Psoas muscle (tissue), 8 donors: ENCODE measurements at regions of chr16 and their contacts with region 1.

Region 1: DNA sequence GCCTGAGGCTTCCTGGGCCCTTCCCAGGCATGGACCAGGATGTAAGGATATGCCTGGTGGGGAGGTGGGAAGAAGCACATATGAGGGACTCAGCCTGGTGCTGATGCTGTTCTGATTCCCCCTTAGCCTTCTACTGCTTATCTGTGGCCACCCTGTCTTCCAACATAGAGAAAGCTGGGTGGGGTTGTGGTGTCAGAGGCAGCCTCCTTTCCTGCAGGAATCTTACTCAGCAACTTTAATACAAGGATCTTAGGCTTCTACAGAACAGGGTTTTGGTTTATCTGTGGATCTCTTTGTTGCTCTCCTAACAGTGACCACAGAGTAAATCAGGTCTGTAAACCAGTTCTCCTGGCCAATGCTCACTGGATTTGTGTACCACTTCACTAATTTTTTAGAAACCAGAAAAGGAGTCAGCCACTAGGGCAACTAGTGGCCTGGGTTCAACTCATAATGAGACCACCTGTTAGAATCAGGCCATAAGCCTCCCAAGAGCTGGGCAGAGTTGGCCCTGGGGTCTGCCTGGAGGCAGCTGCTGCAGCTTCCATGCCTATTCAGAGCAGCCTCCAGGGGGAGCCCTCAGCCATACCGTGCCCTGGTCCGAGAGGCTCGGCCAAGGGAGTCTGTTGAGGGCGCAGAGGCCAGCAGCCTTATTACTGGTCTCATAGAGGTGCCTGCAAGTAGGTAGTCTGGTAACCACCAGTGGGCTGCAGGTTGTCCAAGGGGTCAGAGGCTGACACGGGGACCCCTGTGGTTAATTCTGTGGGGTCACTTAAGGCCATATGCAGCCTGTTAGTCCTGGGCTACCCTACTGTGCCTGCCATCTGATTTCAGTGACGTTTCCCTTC is 7.1 kb downstream of the HAS3 start:
- DNase-seq: peak; percentile 43 to 71
- ATAC-seq: peak; percentile 52 to 77 (median 74)
- H3K4me3 ChIP-seq: no peak overlapping the region
- H3K27ac ChIP-seq: no peak overlapping the region
- H3K4me1 ChIP-seq: peaks cover 8% of the 10 kb centered on the region
- H3K27me3 ChIP-seq: peaks cover 0 to 4% (median 0%) of the 10 kb centered on the region in 3 donors
- CTCF ChIP-seq: peak; percentile 54

Region 2: DNA sequence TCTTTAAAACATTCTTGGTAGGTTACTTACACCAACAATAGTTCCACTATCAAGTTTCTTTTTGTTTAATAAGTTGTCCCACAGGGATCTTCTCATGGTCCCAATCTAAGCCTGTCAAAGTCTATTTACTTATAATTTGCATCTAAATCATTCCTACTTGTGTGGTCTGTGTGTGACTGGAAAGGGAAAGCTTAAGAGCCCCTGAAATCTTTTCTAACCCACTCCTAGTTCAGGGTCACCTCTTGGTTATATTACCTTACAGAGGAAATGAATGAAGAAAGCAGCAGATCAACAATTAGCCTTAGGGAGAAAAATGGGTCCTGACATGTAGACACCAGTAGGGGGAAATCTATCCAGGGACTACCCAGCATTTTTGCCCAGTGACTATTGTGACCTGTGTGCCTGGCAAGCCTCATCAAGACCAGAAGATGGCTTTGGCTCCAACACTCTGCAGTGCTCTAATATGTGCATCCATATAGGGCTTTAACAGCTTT is 117.4 kb before region 1 on chr16:
- intact Hi-C with region 1: loop called (anchors 10 kb)
- DNase-seq: no peak
- ATAC-seq: peak in 2 of 4 donors; percentile 52 to 60
- H3K4me3 ChIP-seq: no peak overlapping the region
- H3K27ac ChIP-seq: no peak overlapping the region
- H3K4me1 ChIP-seq: no peaks in the 10 kb centered on the region
- H3K27me3 ChIP-seq: no peaks in the 10 kb centered on the region
- CTCF ChIP-seq: no peak

Region 3: GRCh38 chr16:69003500-69003899 is 109.0 kb before region 1 on chr16:
- intact Hi-C with region 1: loop called (anchors 10 kb)
- DNase-seq: no peak
- ATAC-seq: no peak
- H3K4me3 ChIP-seq: no peak overlapping the region
- H3K27ac ChIP-seq: no peak overlapping the region
- H3K4me1 ChIP-seq: no peaks in the 10 kb centered on the region
- H3K27me3 ChIP-seq: no peaks in the 10 kb centered on the region
- CTCF ChIP-seq: no peak

Region 4: DNA sequence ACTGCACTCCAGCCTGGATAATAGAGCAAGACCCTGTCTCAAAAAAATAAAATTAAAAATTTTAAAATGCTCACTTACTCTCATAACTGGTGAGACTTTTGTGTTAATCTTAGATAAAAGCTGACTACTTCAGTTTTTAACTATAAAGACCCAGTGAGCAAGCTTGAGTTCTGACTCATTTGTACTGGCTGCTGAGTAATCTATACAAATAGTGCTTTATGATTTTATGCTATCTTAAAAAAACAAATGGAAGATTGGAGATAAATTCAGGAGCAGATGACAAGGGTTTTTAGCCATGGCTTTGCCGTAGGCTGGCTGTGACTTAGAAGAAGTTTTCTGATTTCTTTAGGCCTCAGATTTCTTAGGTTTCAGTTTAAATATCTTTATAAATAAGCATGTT is 104.9 kb after region 1 on chr16:
- intact Hi-C with region 1: no loop called
- DNase-seq: no peak
- ATAC-seq: no peak
- H3K4me3 ChIP-seq: no peak overlapping the region
- H3K27ac ChIP-seq: no peak overlapping the region
- H3K4me1 ChIP-seq: peaks cover 17% of the 10 kb centered on the region
- H3K27me3 ChIP-seq: no peaks in the 10 kb centered on the region
- CTCF ChIP-seq: no peak